ENCODE measurements at regions of chr17 and their contacts with region 1.

Region 1: GRCh38 chr17:30093463-30094147 is 23.0 kb upstream of the NSRP1 start:
- DNase-seq: no peak
- H3K4me3 ChIP-seq: no peak overlapping the region
- CTCF ChIP-seq: peak; percentile 41

Region 2: DNA sequence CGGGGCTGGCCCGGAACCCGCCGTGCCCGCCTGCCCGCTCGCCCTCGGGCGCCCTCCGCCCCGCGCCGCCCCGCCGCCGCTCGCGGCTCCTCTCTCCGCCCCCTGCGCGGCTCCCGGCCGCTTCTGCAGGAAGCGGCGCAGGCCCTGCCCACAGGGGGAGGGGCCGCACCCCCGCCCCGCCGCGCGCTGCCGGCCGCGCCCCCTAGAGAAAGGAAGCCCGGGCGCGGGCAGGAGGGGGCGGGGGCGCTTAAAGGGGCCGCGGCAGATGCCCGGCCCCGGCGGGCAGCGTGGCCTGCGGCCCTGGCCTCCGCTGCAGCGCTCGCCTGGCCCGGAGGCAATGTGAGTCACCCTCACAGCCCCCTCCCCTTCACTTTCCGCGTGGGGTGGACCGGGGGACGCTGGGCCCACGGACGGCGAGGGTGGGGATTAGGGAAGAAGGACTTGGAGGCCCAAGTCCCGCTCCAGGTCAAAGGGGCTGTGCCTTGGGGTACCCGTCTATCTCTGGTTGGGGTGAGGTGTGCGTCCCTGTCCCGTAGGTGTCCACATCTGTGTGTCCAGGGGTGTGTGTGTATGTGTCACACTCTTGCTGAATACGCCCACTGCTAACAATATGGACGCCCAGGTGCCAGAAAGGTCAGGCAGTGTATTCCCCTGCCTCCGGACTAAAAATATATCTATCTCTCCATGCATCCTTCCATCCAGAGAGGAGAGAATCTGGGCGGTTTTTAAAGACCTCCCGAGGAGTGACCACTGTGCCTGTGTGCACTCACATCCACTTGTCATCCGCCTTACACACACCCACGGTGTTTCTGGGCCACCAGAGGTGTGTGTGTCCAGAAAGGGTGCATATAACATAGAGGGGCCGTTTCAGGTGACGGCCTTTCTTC is 503.8 kb before region 1 on chr17 and contains the start of gene GIT1:
- CTCF ChIA-PET with region 1: interaction called, 16 read pairs
- POLR2A ChIA-PET with region 1: no interaction called
- DNase-seq: no peak
- H3K4me3 ChIP-seq: peak within 1 kb of the TSS; percentile 82
- CTCF ChIP-seq: no peak

Region 3: DNA sequence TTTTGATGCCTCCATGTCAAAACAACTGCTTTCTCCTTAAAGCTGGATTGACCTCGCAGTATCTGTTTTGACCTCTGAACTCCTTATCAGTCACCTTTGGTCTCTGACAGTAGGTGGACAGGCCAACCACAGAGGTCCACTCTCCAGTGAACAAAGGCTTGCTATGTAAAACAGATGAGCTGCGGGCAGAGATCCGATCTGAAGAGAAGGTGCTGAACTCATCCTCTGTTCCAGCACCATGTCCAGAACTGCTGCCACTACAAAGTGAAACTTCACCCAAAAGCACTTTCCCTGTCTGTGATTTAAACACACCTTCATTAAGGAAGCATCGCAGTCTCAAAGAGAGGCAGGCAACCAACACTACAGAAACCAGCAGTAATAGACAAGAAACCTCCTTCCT is 353.6 kb before region 1 on chr17:
- CTCF ChIA-PET with region 1: no interaction called
- POLR2A ChIA-PET with region 1: no interaction called
- DNase-seq: no peak
- H3K4me3 ChIP-seq: no peak overlapping the region
- CTCF ChIP-seq: no peak

Region 4: GRCh38 chr17:29941334-29941733 is 152.3 kb before region 1 on chr17 and contains the start of gene EFCAB5:
- CTCF ChIA-PET with region 1: interaction called, 153 read pairs
- POLR2A ChIA-PET with region 1: no interaction called
- DNase-seq: no peak
- H3K4me3 ChIP-seq: no peak within 1 kb of the TSS
- CTCF ChIP-seq: no peak

Region 5: GRCh38 chr17:30021708-30022317 is 71.8 kb before region 1 on chr17:
- CTCF ChIA-PET with region 1: interaction called, 224 read pairs
- POLR2A ChIA-PET with region 1: no interaction called
- DNase-seq: no peak
- H3K4me3 ChIP-seq: no peak overlapping the region
- CTCF ChIP-seq: peak; percentile 69

Region 6: DNA sequence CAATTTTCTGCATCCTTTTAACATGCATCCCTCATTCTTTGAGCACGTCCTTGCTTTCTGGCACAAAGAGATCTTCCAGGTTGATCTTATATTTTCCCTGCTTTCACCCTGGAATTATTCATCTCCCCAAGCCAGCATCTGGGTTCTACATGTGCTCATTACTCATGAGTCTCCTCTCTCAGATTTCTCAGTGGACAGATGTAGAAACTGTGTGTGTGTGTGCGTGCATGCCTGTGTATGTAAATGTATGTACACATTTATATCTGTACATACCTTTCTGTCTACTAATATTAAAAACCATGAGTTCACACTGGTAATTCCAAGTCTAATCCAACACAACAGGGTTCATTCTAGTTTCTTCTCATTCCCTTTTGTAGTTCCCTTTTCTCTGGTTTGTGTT is 18.9 kb before region 1 on chr17:
- CTCF ChIA-PET with region 1: interaction called, 105 read pairs
- POLR2A ChIA-PET with region 1: no interaction called
- DNase-seq: no peak
- H3K4me3 ChIP-seq: no peak overlapping the region
- CTCF ChIP-seq: no peak